Activated B cell treated with CpG ODN at 0.5 μM for 24 hours (primary cell): ENCODE measurements at regions of chr6 and their contacts with region 1.

Region 1: DNA sequence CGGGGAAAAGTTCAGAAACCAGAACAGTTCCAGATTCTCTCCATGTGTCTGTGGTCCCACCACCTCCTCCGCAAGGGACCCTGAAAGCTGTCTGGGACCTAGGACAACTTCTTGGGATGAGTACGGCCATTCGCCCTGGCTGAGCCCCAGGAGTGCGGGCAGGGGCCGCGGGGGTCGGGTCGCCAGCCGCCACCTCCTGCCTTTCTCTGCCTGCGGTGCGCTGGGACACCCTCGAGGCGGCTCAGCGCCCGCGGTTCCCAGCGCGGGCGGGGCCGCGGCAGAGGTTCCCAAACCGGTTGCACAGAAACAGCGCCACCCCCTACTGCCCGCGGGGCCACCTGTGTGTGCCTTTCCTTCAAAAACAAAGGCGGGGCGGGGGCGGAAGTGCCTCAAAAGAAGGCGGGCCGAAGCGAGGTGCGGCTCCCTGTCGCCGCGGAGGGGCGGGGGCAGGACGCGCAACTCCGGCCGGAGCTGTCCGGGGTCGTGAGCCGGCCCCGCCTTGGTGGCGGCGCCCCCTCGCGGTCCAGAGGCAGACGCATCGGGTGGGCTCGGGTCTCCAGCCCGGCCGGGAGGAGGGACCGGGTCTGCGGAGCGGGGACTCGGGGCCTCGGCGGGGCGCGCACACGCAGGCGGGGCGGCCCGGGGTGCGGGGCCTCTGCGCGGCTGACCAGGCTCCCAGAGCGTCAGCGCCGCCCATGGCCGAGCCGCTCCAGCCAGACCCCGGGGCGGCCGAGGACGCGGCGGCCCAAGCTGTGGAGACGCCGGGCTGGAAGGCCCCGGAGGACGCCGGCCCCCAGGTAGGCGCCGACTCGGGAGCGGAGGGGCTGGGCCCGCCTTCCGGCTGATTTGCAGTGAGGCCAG is at the start of gene HEBP2:
- DNase-seq: peak; percentile 88
- ATAC-seq: peak; percentile 87
- H3K4me3 Mint-ChIP-seq: peak within 1 kb of the TSS; percentile 90
- H3K27ac Mint-ChIP-seq: peak within 1 kb of the TSS; percentile 89
- H3K4me1 Mint-ChIP-seq: peaks cover 20% of the 10 kb centered on the region
- H3K27me3 Mint-ChIP-seq: no peaks in the 10 kb centered on the region
- CTCF ChIP-seq: no peak
- total RNA-seq, gene HEBP2: 26.2 and 32.7 TPM in 2 replicates

Region 2: GRCh38 chr6:136822376-136823127 is 1581.5 kb before region 1 on chr6 and contains the start of gene PEX7:
- CTCF ChIA-PET with region 1: no interaction called
- POLR2A ChIA-PET with region 1: no interaction called
- intact Hi-C with region 1: loop called (anchors 10 kb)
- DNase-seq: peak; percentile 86
- ATAC-seq: peak; percentile 91
- H3K4me3 Mint-ChIP-seq: peak within 1 kb of the TSS; percentile 94
- H3K27ac Mint-ChIP-seq: peak within 1 kb of the TSS; percentile 98
- H3K4me1 Mint-ChIP-seq: peaks cover 16% of the 10 kb centered on the region
- H3K27me3 Mint-ChIP-seq: peaks cover 4% of the 10 kb centered on the region
- CTCF ChIP-seq: no peak
- total RNA-seq, gene PEX7: 5.0 and 6.8 TPM in 2 replicates

Region 3: DNA sequence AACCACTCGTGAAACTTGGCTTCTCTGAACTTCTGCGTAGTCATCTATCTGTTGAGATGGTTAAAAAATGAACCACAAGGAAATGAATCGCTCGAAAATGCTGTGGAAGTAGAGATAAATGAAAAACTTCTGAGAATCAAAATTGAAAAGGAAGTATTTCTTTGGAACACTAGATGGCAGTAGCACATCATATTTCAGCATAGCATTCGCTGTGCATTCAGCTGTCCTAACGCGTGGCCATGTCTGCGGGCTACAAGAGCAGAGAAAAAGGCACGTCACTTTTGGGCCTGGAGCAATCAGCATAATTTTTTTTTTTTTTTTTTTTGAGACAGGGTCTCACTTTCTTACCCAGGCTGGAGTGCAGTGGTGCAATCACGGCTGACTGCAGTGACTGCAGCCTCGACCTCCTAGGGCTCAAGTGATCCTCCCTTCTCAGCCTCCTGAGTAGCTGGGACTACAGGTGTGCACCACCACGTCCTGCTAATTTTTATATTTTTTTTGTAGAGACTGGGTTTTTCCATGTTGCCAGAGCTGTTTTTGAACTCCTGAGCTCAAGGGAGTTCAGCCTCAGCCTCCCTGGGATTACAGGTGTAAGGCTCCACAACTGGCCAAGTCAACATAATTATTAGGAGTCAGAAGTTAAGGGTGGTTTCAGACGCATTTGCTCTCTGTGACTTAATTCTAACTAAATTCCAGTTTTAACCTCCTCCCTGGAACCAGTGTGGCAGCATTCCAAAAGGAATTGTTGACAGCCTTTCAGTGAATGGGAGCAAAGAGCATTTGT is 288.0 kb before region 1 on chr6:
- CTCF ChIA-PET with region 1: interaction called, 16 read pairs
- POLR2A ChIA-PET with region 1: interaction called, 6 read pairs
- intact Hi-C with region 1: loop called (anchors 1 kb)
- DNase-seq: no peak
- ATAC-seq: peak; percentile 85
- H3K4me3 Mint-ChIP-seq: no peak overlapping the region
- H3K27ac Mint-ChIP-seq: no peak overlapping the region
- H3K4me1 Mint-ChIP-seq: peaks cover 6% of the 10 kb centered on the region
- H3K27me3 Mint-ChIP-seq: peaks cover 26% of the 10 kb centered on the region
- CTCF ChIP-seq: peak; percentile 61

Region 4: GRCh38 chr6:138287144-138287955 is 116.7 kb before region 1 on chr6:
- CTCF ChIA-PET with region 1: no interaction called
- POLR2A ChIA-PET with region 1: no interaction called
- intact Hi-C with region 1: loop called (anchors 2 kb)
- DNase-seq: no peak
- ATAC-seq: peak; percentile 28
- H3K4me3 Mint-ChIP-seq: no peak overlapping the region
- H3K27ac Mint-ChIP-seq: no peak overlapping the region
- H3K4me1 Mint-ChIP-seq: no peaks in the 10 kb centered on the region
- H3K27me3 Mint-ChIP-seq: peaks cover 7% of the 10 kb centered on the region
- CTCF ChIP-seq: no peak

Region 5: GRCh38 chr6:138588805-138589434 is 184.9 kb after region 1 on chr6:
- CTCF ChIA-PET with region 1: no interaction called
- POLR2A ChIA-PET with region 1: no interaction called
- intact Hi-C with region 1: loop called (anchors 1 kb)
- DNase-seq: no peak
- ATAC-seq: peak; percentile 48
- H3K4me3 Mint-ChIP-seq: no peak overlapping the region
- H3K27ac Mint-ChIP-seq: no peak overlapping the region
- H3K4me1 Mint-ChIP-seq: peaks cover 27% of the 10 kb centered on the region
- H3K27me3 Mint-ChIP-seq: no peaks in the 10 kb centered on the region
- CTCF ChIP-seq: peak; percentile 71

Region 6: GRCh38 chr6:138773177-138774091 is 369.4 kb after region 1 on chr6 and contains the start of gene CCDC28A:
- CTCF ChIA-PET with region 1: no interaction called
- POLR2A ChIA-PET with region 1: interaction called, 7 read pairs
- intact Hi-C with region 1: loop called (anchors 1 kb)
- DNase-seq: peak; percentile 90
- ATAC-seq: peak; percentile 85
- H3K4me3 Mint-ChIP-seq: peak within 1 kb of the TSS; percentile 100
- H3K27ac Mint-ChIP-seq: peak within 1 kb of the TSS; percentile 100
- H3K4me1 Mint-ChIP-seq: peaks cover 28% of the 10 kb centered on the region
- H3K27me3 Mint-ChIP-seq: no peaks in the 10 kb centered on the region
- CTCF ChIP-seq: no peak
- total RNA-seq, gene CCDC28A: 14.0 and 14.6 TPM in 2 replicates